Dendritic cell treated with granulocyte-macrophage colony-stimulating factor and Interleukin-4, amounts not matched to agents 40 ng/mL and 50 ng/mL, for 4 days (primary cell): ENCODE measurements at regions of chr5 and their contacts with region 1.

Region 1: DNA sequence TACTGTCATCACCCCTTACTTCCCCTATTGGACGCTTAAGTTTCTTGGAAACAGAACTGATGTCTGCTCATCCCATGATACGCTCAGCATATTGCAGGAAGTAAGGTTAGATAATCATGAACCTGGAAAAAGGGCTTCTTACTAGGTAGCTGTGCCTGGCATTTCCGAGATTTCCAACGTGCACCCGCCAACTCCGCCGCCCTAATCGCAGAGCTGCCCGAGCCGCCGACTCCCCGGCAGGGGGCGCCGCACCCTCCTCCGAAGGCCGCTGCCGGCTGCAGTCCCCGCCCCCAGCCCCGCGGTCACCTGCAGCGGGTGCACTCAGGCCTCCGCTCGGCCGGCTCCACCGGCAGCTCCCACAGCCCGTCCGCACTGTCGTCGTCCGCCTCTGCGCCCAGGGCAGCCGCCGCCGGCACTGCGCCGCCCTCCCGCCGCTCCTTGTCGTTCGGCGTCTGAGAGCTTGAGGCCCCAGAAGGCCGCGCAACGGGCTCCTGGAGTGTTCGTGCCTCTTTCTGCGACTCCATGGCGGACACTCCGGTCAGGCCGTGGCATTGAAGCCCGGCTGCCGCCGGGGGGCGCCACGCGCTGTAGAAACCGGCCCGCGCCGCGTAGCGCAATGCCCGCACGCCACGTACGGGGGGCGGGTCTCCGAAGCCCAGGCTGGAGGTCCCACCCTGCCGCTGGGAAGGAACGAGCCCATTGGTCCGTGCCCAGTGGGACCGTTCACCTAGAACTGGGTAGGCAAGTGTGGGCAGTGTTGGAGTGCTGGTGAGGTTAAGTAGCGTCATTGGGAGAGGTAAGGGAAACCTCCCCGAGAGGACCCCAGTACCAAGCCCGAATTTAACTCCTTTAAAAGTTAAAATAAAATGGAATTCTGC is at the start of gene DTWD2:
- H3K4me3 Mint-ChIP-seq: peak within 1 kb of the TSS; percentile 80
- H3K27ac Mint-ChIP-seq: peak within 1 kb of the TSS; percentile 88
- H3K4me1 Mint-ChIP-seq: peaks cover 13% of the 10 kb centered on the region
- H3K27me3 Mint-ChIP-seq: peaks cover 2% of the 10 kb centered on the region

Region 2: DNA sequence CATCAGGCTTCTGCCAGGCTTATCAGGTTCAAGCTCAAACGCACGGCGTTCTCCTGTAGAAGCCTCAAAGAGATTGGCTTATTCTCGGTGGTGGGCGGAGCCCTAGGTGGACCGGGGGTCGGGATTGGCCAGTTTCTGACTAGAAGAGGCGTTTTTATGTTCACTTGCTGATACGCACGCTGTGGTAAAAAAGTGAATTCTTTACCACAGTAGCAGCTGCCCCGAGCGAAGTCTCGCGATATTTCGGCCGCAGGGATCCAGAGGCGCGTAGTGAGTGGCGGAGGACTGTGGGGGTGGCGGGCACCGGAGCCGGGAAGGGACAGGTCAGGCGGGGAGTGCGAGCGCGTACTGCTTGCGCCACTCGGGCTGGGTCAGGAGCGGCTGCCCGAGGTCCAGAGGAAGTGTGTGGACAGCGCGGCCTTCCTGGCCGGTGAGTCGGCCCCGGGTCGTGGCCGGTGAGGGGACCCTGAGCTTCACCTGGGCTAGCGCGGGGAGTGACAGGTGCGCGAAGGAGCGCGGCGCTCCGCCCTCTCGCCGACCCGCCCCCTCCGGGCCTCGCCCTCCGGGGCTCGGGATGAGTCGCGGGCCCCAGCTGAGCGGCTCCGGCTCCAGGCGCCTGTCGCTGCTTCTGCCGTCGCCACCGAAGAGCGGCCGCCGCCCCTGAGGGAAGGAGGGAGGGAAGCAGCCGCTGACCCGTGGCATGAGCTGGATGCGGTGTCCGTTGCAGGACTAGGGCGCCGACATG is 82.8 kb after region 1 on chr5 and contains the start of gene DMXL1:
- intact Hi-C with region 1: loop called (anchors 5 kb)
- H3K4me3 Mint-ChIP-seq: peak within 1 kb of the TSS; percentile 89
- H3K27ac Mint-ChIP-seq: peak within 1 kb of the TSS; percentile 97
- H3K4me1 Mint-ChIP-seq: peaks cover 42% of the 10 kb centered on the region
- H3K27me3 Mint-ChIP-seq: no peaks in the 10 kb centered on the region

Region 3: DNA sequence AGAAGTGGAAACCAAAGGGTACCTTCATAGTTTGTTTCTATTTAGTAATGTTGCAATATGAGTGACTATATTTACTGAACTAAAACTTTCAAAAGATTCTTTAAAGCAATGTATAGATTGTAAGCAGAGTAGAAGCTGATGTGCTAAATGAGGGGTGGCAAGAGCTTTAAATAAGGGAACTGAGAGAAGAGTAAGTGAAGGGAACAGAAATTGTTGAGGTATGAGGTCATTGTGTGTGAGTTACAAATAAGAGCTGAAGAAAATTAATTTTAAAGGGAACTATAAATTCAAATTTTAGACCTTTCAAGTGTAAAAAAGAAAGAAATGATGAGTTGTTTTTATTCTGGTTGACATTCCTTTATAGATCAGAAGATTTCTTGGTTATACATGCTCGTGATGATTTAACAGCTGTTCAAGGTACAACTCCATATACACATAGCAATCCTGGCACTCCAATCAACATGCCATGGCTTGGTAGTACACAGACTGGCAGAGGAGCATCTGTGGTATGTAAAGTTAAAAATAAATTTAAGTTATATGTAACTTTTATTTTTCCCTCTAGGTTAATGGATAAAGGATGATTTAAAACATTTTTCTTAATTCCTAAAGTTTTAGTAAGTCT is 232.5 kb after region 1 on chr5:
- intact Hi-C with region 1: loop called (anchors 10 kb)
- H3K4me3 Mint-ChIP-seq: no peak overlapping the region
- H3K27ac Mint-ChIP-seq: peak overlapping the region; percentile 27
- H3K4me1 Mint-ChIP-seq: peaks cover 7% of the 10 kb centered on the region
- H3K27me3 Mint-ChIP-seq: no peaks in the 10 kb centered on the region

Region 4: GRCh38 chr5:119267958-119268386 is 279.7 kb after region 1 on chr5:
- intact Hi-C with region 1: loop called (anchors 5 kb)
- H3K4me3 Mint-ChIP-seq: peak overlapping the region; percentile 91
- H3K27ac Mint-ChIP-seq: peak overlapping the region; percentile 94
- H3K4me1 Mint-ChIP-seq: peaks cover 56% of the 10 kb centered on the region
- H3K27me3 Mint-ChIP-seq: no peaks in the 10 kb centered on the region

Region 5: DNA sequence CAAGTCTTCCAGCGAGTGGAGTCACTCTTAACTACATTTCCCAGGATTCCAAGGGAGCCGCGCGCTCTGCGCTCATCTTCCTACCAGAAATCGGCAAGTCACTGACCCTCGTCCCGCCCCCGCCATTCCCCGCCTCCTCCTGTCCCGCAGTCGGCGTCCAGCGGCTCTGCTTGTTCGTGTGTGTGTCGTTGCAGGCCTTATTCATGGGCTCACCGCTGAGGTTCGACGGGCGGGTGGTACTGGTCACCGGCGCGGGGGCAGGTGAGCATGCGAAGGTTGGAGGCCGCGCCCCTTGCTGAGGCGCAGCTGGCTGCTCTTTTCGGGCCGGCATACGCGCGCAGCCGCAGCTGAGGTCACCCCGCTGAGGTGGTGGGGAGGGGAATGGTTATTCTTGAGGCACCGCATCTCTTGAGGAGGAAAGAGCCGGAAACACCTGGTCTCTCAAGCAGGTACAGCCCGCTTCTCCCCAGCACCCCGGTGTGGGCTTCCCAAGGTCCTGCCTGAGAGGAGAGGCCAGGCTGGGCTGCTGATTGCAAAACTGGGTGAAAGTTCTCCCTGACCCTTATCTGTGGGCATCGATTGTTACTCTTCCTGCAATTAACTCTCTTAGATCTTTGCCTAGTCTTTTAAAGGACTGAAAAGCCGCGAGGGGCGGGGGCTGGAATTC is 464.3 kb after region 1 on chr5 and contains the start of gene HSD17B4:
- intact Hi-C with region 1: loop called (anchors 5 kb)
- H3K4me3 Mint-ChIP-seq: peak within 1 kb of the TSS; percentile 88
- H3K27ac Mint-ChIP-seq: peak within 1 kb of the TSS; percentile 94
- H3K4me1 Mint-ChIP-seq: peaks cover 48% of the 10 kb centered on the region
- H3K27me3 Mint-ChIP-seq: peaks cover 2% of the 10 kb centered on the region